ENCODE measurements at regions of chr20 and their contacts with region 1.

Region 1: GRCh38 chr20:36672991-36673390 is 27.0 kb upstream of the SLA2 start:
- DNase-seq: no peak
- ATAC-seq: no peak
- H3K4me3 ChIP-seq: no peak overlapping the region
- H3K4me3 Mint-ChIP-seq: no peak overlapping the region
- H3K27ac ChIP-seq: no peak overlapping the region
- H3K27ac Mint-ChIP-seq: no peak overlapping the region
- H3K4me1 ChIP-seq: no peaks in the 10 kb centered on the region
- H3K4me1 Mint-ChIP-seq: no peaks in the 10 kb centered on the region
- H3K27me3 ChIP-seq: no peaks in the 10 kb centered on the region
- H3K27me3 Mint-ChIP-seq: no peaks in the 10 kb centered on the region

Region 2: DNA sequence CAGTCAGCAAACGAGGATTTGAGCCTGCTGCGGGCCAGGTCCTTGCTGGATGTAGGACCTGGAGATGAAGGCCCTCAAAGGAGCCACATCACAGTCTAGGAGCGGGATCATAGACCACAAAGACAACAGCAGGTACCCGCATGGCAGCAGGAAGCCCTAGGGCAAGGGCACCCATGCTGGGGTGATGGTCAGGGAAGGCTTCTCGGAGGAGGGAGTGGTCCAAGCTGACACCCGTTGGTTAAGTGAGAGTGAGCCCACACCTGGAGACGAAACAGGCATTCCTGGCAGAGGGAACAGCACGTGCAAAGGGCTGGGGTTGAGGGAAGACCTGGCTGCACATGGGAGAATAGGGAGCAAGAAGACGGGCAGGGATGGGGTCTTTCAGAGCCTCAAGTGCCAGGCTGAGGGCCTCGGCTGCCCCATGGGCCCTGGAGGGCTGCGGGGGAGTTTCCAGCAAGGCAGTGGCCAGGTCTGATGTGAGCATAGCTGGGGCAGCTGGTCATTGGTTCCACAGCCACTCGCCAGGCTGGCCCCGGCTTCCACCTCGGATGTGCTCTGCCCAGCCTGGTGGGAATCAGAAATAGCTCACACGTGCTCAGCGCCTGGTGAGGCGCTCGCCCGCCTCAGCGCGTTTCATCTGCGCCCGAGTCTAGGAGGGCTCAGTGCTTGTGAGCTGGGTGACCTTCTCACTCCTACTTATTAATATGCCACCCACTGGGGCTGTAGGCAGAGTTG is 351.9 kb before region 1 on chr20:
- CTCF ChIA-PET with region 1: no interaction called
- POLR2A ChIA-PET with region 1: no interaction called
- intact Hi-C with region 1: no loop called
- DNase-seq: no peak
- ATAC-seq: no peak
- H3K4me3 ChIP-seq: no peak overlapping the region
- H3K4me3 Mint-ChIP-seq: no peak overlapping the region
- H3K27ac ChIP-seq: no peak overlapping the region
- H3K27ac Mint-ChIP-seq: no peak overlapping the region
- H3K4me1 ChIP-seq: no peaks in the 10 kb centered on the region
- H3K4me1 Mint-ChIP-seq: no peaks in the 10 kb centered on the region
- H3K27me3 ChIP-seq: no peaks in the 10 kb centered on the region
- H3K27me3 Mint-ChIP-seq: peaks cover 0 to 17% (median 6%) of the 10 kb centered on the region in 5 donors

Region 3: DNA sequence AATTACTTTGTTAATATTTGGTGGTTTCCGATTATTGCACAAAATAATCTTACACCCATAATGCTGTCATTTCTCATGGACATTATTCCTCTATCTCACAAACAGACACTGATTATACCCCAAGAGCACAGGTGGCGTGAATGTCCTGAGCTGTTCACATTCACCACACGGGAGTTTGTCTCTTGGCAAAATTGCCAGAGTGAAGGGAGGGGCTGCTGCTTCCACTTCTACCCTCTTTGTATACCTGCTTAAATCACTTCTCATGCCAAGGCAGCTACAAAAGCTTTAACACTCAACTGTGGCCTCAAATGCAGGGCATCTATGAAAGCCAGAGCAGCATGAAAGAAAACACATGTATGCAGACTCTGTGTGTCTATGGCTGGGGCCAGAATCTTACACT is 14.9 kb after region 1 on chr20:
- CTCF ChIA-PET with region 1: no interaction called
- POLR2A ChIA-PET with region 1: no interaction called
- intact Hi-C with region 1: loop called in 1 of 2 experiments (anchors 1 kb)
- DNase-seq: no peak
- ATAC-seq: no peak
- H3K4me3 ChIP-seq: no peak overlapping the region
- H3K4me3 Mint-ChIP-seq: no peak overlapping the region
- H3K27ac ChIP-seq: no peak overlapping the region
- H3K27ac Mint-ChIP-seq: no peak overlapping the region
- H3K4me1 ChIP-seq: no peaks in the 10 kb centered on the region
- H3K4me1 Mint-ChIP-seq: peaks cover 0 to 5% (median 0%) of the 10 kb centered on the region in 7 donors
- H3K27me3 ChIP-seq: no peaks in the 10 kb centered on the region
- H3K27me3 Mint-ChIP-seq: no peaks in the 10 kb centered on the region

Region 4: GRCh38 chr20:36886859-36887751 is 214.1 kb after region 1 on chr20:
- CTCF ChIA-PET with region 1: no interaction called
- POLR2A ChIA-PET with region 1: no interaction called
- intact Hi-C with region 1: no loop called
- DNase-seq: peak; percentile 59 to 84 (median 75)
- ATAC-seq: peak; percentile 94
- H3K4me3 ChIP-seq: no peak overlapping the region
- H3K4me3 Mint-ChIP-seq: peak overlapping the region in 7 of 10 donors; percentile 10 to 62 (median 36)
- H3K27ac ChIP-seq: peak overlapping the region; percentile 33
- H3K27ac Mint-ChIP-seq: peak overlapping the region; percentile 2 to 89 (median 73)
- H3K4me1 ChIP-seq: peaks cover 5 to 7% of the 10 kb centered on the region in 2 donors
- H3K4me1 Mint-ChIP-seq: peaks cover 4 to 22% (median 16%) of the 10 kb centered on the region in 7 donors
- H3K27me3 ChIP-seq: no peaks in the 10 kb centered on the region
- H3K27me3 Mint-ChIP-seq: no peaks in the 10 kb centered on the region

Measured in naive thymus-derived CD4-positive, alpha-beta T cell (primary cell).